ENCODE measurements at regions of chr20 and their contacts with region 1.

Region 1: GRCh38 chr20:32396646-32397160 is 38.6 kb downstream of the ASXL1 start:
- DNase-seq: no peak
- H3K4me3 ChIP-seq: no peak overlapping the region
- H3K27me3 ChIP-seq: no peaks in the 10 kb centered on the region
- CTCF ChIP-seq: no peak

Region 2: GRCh38 chr20:32443386-32443974 is 46.8 kb after region 1 on chr20:
- CTCF ChIA-PET with region 1: no interaction called
- POLR2A ChIA-PET with region 1: interaction called, 19 read pairs
- DNase-seq: no peak
- H3K4me3 ChIP-seq: no peak overlapping the region
- H3K27me3 ChIP-seq: no peaks in the 10 kb centered on the region
- CTCF ChIP-seq: no peak

Measured in BJ (cell line).